Activated T-helper 1 cell treated with anti-CD3 and anti-CD28 coated beads, Interleukin-12 subunit alpha, Interleukin-12 subunit beta, Interleukin-2, Interleukin-4 antibody, amounts not matched to agents 30 ng/mL and 10 ng/mL and 1 ng/mL, durations not matched to agents 14 hours and 24 hours and 36 hours (primary cell): ENCODE measurements at regions of chr4 and their contacts with region 1.

Region 1: DNA sequence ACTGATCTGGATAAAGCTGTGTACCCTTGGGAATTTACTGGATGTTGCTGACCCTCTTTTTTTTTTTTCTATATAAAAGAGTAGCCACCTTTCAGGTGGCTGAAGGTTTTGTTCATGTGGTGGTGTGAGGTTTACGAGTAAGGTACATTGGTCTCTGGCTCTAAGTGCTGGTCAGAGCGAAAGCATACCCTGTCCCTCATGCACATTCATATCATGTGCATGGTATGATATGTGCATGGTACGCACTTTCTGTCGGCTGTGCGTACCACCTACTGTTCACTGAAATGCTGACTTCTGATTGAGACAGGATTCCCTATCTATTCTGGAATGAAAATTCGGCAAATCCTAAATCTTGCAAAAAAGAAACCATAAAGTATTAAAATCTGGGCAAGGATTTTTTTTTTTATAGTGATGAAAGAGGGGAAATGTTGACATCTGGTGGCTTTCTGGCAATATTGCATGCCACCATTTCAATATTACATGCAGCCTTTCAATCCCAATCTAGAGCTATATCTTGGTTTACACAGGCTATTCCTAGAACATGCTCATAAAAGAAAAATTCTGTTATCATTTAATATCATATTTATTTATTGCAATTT is 32.8 kb downstream of the FAM149A start:
- DNase-seq: no peak
- H3K4me3 Mint-ChIP-seq: no peak overlapping the region
- H3K27ac Mint-ChIP-seq: no peak overlapping the region
- H3K4me1 Mint-ChIP-seq: peaks cover 19% of the 10 kb centered on the region
- H3K27me3 Mint-ChIP-seq: peaks cover 16% of the 10 kb centered on the region

Region 2: GRCh38 chr4:185640811-185641675 is 496.3 kb before region 1 on chr4:
- intact Hi-C with region 1: loop called (anchors 1 kb)
- DNase-seq: no peak
- H3K4me3 Mint-ChIP-seq: no peak overlapping the region
- H3K27ac Mint-ChIP-seq: no peak overlapping the region
- H3K4me1 Mint-ChIP-seq: no peaks in the 10 kb centered on the region
- H3K27me3 Mint-ChIP-seq: peaks cover 38% of the 10 kb centered on the region

Region 3: DNA sequence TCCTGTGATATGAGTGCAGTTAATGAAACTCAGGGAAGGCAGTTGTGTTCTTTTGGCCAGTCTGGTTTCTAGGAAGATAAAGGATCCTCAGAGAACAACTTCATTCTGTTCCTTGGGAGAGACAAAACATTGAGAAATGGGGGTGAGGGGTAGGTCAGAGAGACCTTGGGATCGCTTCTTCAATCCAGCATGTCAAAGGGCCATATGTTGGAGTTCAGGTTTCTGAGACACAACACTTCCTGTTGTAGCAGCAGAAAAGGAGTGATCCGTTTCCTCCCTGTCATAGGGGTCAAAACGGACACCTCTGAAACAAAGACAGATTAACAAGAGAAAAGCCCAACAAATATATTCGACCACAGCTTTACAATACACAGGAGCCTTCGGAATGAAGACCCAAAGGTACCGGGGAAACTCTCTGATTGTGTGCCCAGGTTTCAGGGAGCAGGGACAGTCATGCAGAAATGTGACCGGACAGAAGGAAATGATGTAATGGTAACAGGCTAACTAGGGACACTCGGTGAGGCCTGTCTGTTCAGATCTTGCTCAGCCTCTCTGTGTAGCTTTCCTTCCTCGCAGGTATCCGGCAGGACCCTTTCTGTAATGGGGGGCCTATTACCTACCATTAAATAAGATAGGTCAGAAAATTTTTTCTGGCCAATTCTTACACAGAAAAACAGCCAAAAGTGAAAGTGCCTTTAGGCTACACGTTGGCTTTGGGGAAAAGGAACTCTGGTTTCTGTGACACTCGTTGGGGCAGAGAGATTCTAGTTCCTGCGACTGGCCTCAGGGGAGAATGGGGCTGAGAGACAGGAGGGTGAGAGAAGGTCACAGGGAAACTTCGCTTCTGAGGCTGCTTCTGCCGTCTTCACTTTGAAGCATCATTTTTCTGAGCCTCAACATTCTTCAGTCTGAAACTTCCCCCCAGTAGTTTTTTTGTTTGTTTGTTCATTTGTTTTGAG is 171.6 kb before region 1 on chr4:
- intact Hi-C with region 1: no loop called
- DNase-seq: no peak
- H3K4me3 Mint-ChIP-seq: no peak overlapping the region
- H3K27ac Mint-ChIP-seq: no peak overlapping the region
- H3K4me1 Mint-ChIP-seq: no peaks in the 10 kb centered on the region
- H3K27me3 Mint-ChIP-seq: peaks cover 3% of the 10 kb centered on the region

Region 4: DNA sequence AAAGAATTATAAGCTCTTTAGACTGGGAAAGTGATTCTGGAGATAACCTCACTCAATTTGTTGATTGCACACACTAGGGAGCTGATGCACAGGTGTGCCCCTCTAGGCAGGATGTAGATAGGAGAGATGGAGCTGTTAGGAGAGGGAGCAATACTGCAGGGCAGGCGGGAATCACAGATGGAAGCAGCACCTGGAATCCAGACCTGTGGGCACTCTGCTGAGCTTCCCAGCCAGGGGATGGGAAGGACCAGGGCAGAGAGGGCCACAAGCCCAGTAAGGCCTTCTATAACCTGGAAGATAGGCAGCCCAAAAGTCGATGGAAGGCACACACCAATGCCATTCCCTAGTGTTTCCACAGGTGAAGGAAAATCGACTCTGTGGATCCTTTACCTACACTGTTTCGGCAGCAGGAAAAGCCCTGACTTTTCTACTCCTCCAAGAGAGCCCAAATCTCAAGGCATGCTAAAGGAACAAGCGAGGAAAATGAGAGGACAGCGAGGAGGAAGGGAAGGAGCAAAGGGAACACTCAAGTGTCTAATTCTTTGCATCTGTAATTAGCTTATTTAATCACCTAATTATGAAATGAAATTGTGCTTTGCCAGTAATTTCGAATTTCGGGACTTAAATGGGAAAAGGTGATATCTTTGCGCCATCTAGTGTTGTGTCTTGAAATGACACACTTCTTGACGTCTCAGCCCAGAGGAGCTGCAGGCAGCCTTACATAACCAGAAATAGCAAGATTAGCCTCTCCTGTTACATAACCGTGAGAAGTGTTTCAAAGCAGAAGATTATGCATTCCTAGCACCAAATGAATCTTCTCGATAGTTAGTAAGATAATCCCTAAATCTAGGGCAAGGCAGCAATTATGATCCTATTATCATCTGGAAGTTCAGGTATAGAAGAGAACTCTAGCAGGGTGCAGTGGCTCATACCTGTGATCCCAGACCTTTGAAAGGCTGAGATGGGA is 99.3 kb before region 1 on chr4:
- intact Hi-C with region 1: no loop called
- DNase-seq: peak; percentile 5
- H3K4me3 Mint-ChIP-seq: no peak overlapping the region
- H3K27ac Mint-ChIP-seq: no peak overlapping the region
- H3K4me1 Mint-ChIP-seq: no peaks in the 10 kb centered on the region
- H3K27me3 Mint-ChIP-seq: peaks cover 11% of the 10 kb centered on the region

Region 5: GRCh38 chr4:186067757-186068385 is 69.4 kb before region 1 on chr4:
- intact Hi-C with region 1: loop called (anchors 5 kb)
- DNase-seq: no peak
- H3K4me3 Mint-ChIP-seq: no peak overlapping the region
- H3K27ac Mint-ChIP-seq: no peak overlapping the region
- H3K4me1 Mint-ChIP-seq: peaks cover 18% of the 10 kb centered on the region
- H3K27me3 Mint-ChIP-seq: peaks cover 3% of the 10 kb centered on the region